ENCODE measurements at regions of chr15 and their contacts with region 1.

Region 1: GRCh38 chr15:61974759-61975158 is 85.5 kb downstream of the VPS13C start:
- DNase-seq: no peak
- ATAC-seq: no peak
- H3K4me3 ChIP-seq: no peak overlapping the region
- H3K4me3 Mint-ChIP-seq: no peak overlapping the region
- H3K27ac ChIP-seq: no peak overlapping the region
- H3K27ac Mint-ChIP-seq: peak overlapping the region in 4 of 9 donors; percentile 19 to 78 (median 42)
- H3K4me1 ChIP-seq: peaks cover 0 to 6% of the 10 kb centered on the region in 2 donors
- H3K4me1 Mint-ChIP-seq: peaks cover 10 to 18% (median 14%) of the 10 kb centered on the region in 7 donors
- H3K27me3 ChIP-seq: no peaks in the 10 kb centered on the region
- H3K27me3 Mint-ChIP-seq: no peaks in the 10 kb centered on the region

Region 2: GRCh38 chr15:61916104-61916503 is 58.7 kb before region 1 on chr15:
- CTCF ChIA-PET with region 1: no interaction called
- POLR2A ChIA-PET with region 1: no interaction called
- intact Hi-C with region 1: loop called in 1 of 2 experiments (anchors 5 kb)
- DNase-seq: no peak
- ATAC-seq: no peak
- H3K4me3 ChIP-seq: no peak overlapping the region
- H3K4me3 Mint-ChIP-seq: no peak overlapping the region
- H3K27ac ChIP-seq: no peak overlapping the region
- H3K27ac Mint-ChIP-seq: no peak overlapping the region
- H3K4me1 ChIP-seq: no peaks in the 10 kb centered on the region
- H3K4me1 Mint-ChIP-seq: no peaks in the 10 kb centered on the region
- H3K27me3 ChIP-seq: no peaks in the 10 kb centered on the region
- H3K27me3 Mint-ChIP-seq: no peaks in the 10 kb centered on the region